ENCODE measurements at regions of chr6 and their contacts with region 1.

Region 1: DNA sequence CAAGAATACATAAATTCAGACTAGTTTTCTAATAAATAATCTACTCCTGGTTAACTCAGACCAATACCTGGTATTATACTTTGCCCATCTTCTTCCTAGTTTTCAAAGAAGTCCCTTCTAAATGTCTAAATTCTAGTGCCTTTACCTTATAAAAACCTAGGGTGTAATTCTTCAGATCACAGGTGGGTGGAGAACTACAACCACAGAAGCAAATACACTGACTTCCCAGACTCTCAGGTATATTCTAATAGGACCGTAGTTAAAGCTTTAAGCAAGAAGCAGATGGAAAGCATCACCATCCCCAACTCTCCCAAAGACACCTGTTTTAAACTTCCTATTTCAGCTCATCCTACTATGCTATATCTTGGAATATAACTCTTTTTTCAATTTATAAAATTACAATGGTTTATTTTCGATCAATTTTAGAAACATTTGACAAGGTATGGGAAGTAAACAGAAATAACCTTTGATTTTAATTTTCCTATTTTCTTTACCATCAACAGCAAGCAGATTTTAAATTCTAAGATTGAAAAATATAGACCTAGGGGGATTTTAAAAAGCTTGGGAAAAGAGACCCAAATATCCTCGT is 15.8 kb downstream of the MAN1A1 start:
- DNase-seq: peak in 1 of 35 experiments; percentile 60
- ATAC-seq: peak; percentile 49 to 80 (median 61)
- H3K4me3 ChIP-seq: no peak overlapping the region
- H3K4me3 Mint-ChIP-seq: no peak overlapping the region
- H3K27ac ChIP-seq: no peak overlapping the region
- H3K27ac Mint-ChIP-seq: no peak overlapping the region
- H3K4me1 ChIP-seq: peaks cover 0 to 3% of the 10 kb centered on the region in 2 experiments
- H3K4me1 Mint-ChIP-seq: peaks cover 11 to 27% (median 15%) of the 10 kb centered on the region in 3 donors
- H3K27me3 ChIP-seq: no peaks in the 10 kb centered on the region
- H3K27me3 Mint-ChIP-seq: no peaks in the 10 kb centered on the region

Region 2: GRCh38 chr6:119349323-119350042 is 15.7 kb after region 1 on chr6 and contains the start of gene MAN1A1:
- CTCF ChIA-PET with region 1: interaction called, 8 to 23 read pairs
- POLR2A ChIA-PET with region 1: interaction called in 1 of 2 experiments, 4 read pairs
- DNase-seq: peak; percentile 73 to 94 (median 84)
- ATAC-seq: peak; percentile 89 to 91 (median 90)
- H3K4me3 ChIP-seq: peak within 1 kb of the TSS; percentile 95 to 97
- H3K4me3 Mint-ChIP-seq: peak within 1 kb of the TSS; percentile 82 to 94 (median 89)
- H3K27ac ChIP-seq: peak within 1 kb of the TSS; percentile 69
- H3K27ac Mint-ChIP-seq: peak within 1 kb of the TSS; percentile 77 to 91
- H3K4me1 ChIP-seq: peaks cover 4 to 15% of the 10 kb centered on the region in 2 experiments
- H3K4me1 Mint-ChIP-seq: peaks cover 54 to 57% (median 55%) of the 10 kb centered on the region in 3 donors
- H3K27me3 ChIP-seq: no peaks in the 10 kb centered on the region
- H3K27me3 Mint-ChIP-seq: no peaks in the 10 kb centered on the region
- total RNA-seq, gene MAN1A1: 9.4 to 13.6 (median 12.3) TPM